ENCODE measurements at regions of chr3 and their contacts with region 1.

Region 1: GRCh38 chr3:159828542-159828943 is 160.1 kb upstream of the IL12A start:
- H3K4me3 ChIP-seq: no peak overlapping the region
- H3K27ac ChIP-seq: peak overlapping the region; percentile 55
- H3K4me1 ChIP-seq: peaks cover 27% of the 10 kb centered on the region
- CTCF ChIP-seq: no peak

Region 2: DNA sequence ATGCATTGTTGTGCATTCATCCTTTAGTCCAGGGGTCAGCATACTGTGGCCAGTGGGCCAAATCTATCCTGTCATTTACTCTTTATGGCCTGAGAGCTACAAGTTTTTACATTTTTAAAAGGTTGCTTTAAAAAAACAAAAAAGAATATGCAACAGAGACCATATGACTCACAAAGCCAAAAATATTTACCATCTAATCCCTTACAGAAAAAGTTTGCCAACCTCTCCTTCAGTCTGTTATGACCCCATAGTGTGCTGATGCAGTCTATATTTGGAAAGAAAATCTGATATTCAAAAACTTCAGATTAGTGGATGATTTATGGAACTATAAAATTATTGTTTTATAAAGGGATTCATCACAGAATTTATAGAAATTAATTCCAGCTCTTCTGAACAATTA is 77.4 kb before region 1 on chr3:
- CTCF ChIA-PET with region 1: no interaction called
- POLR2A ChIA-PET with region 1: no interaction called
- H3K4me3 ChIP-seq: no peak overlapping the region
- H3K27ac ChIP-seq: no peak overlapping the region
- H3K4me1 ChIP-seq: no peaks in the 10 kb centered on the region
- CTCF ChIP-seq: no peak

Region 3: DNA sequence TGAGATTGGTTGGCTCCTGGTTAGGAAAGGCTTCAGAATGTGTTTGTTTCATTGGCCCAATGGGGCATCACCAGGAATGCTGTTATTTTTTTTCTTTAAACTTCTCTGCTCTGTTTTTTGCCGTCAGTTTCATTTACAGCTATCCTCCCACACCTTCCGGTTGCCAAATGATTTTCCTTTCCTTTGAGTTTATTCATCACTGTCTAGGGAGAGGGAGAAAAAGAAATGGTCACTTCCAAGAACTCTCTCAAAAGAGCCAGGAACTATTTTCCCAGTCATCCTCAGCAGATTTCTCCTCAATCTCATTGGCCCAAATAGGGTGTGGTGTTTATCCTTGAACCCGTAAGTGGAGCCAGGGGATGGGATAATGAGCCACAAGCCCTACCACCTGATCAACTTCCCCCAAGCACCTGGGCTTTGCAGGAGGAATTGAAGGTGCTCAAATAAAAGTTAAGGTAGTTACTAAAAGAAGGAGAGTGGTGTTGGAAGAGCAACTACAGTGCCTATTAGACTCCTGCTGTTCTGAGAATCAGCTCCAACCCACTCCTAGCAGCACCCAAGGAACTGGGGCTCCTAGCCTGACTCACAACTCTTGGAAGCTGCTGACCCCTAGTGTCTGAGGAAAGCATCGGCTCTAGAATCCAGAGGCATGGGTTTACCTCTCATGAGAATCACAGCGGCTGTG is 23.7 kb before region 1 on chr3:
- CTCF ChIA-PET with region 1: interaction called, 11 read pairs
- POLR2A ChIA-PET with region 1: no interaction called
- H3K4me3 ChIP-seq: no peak overlapping the region
- H3K27ac ChIP-seq: no peak overlapping the region
- H3K4me1 ChIP-seq: peaks cover 26% of the 10 kb centered on the region
- CTCF ChIP-seq: peak; percentile 76

Region 4: DNA sequence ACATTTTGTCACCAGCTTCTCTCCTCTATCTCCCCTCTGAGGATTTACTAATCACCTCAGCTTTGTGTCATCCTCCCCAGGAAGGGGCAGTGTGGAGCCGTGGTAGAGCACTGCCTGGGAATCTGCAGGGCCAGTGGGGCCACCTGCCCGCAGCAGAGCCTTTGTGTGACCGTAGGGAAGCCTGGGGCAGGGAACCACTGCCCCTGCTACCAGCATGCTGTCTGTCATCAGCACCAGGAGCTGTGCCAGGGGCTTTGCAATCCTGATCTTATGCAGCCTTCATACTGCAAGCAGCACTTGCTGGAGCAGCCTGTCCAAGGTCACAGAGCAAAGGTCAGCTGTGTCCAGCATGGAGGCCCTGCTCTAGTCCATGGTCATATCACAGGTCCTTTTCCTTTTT is 10.1 kb before region 1 on chr3:
- CTCF ChIA-PET with region 1: interaction called, 12 read pairs
- POLR2A ChIA-PET with region 1: no interaction called
- H3K4me3 ChIP-seq: no peak overlapping the region
- H3K27ac ChIP-seq: no peak overlapping the region
- H3K4me1 ChIP-seq: peaks cover 8% of the 10 kb centered on the region
- CTCF ChIP-seq: peak; percentile 16; the same call in 1 of the 2 replicates

Region 5: DNA sequence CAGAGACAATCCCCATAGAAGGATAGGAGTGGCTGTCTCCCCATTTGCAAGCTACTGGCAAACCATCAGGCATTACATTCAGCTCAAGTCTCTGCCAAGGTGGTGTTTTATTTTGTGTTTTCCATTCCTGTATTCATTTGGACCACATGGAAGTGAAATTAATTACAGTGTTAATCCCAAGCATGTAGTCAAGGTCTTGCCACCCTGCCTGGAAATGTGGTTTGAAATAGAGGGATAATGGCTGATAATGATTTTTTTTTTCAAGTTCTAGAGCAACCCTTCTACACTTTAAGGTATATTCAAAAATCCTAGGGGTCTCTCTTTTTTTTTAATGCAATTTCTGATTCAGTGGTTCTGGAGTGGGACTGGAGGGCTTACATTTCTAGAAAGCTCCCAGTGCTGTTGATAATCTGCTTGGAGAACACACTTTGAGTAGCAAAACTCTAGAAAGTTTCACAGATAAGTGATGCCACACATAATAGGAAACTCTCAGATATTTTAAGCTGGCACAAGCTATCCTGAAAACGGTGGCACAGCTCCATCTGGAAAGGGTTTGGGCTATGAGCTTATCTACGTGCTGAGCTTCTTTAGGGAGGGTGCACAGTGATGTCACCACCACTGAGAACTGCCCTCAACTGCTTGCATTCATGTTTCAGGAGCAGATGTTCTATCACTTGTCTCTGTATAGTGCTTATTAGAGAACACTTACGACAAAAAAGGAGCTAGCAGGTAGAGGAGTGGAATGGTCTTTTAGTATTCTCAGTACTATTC is 20.0 kb after region 1 on chr3:
- CTCF ChIA-PET with region 1: interaction called, 22 read pairs
- POLR2A ChIA-PET with region 1: interaction called, 4 read pairs
- H3K4me3 ChIP-seq: no peak overlapping the region
- H3K27ac ChIP-seq: no peak overlapping the region
- H3K4me1 ChIP-seq: peaks cover 18% of the 10 kb centered on the region
- CTCF ChIP-seq: no peak

Region 6: GRCh38 chr3:159865011-159865579 is 36.6 kb after region 1 on chr3:
- CTCF ChIA-PET with region 1: interaction called, 10 read pairs
- POLR2A ChIA-PET with region 1: no interaction called
- H3K4me3 ChIP-seq: no peak overlapping the region
- H3K27ac ChIP-seq: peak overlapping the region; percentile 70
- H3K4me1 ChIP-seq: peaks cover 17% of the 10 kb centered on the region
- CTCF ChIP-seq: no peak

Region 7: DNA sequence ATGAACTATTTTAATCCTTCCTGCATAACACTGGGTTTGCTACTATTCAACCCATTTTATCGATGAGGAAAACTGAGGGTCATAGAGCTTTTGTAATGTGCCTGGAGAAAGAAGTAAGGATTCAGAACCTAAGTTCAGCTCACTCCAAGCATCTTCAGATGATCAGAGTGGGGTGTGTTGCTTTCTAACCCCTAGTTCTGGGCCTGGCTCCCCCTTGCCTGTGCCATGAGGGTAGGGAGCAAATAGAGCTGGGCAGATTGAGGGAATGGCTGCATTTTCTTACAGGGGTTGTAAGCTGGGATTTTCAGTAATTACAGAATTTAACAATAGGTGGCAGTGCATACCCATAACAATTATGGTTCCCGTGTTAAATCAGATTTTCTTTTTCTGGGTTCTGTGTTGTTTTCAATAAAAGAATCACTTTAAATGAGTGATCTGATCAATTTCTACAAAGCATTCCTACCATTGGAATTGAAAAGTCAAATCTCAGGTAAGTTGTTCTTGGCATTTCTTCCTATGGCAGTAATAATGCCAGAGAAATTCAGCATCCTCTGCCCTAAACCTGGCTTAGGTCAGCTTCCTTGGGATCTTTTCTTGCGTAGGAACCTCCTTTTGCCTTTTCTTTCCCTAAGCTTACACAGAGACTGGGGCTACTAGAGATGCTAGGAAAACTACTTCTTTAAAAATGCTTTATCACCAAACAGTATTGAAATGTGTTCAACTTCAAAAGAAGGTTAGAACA is 56.3 kb after region 1 on chr3:
- CTCF ChIA-PET with region 1: interaction called, 45 read pairs
- POLR2A ChIA-PET with region 1: no interaction called
- H3K4me3 ChIP-seq: no peak overlapping the region
- H3K27ac ChIP-seq: no peak overlapping the region; the same call in 1 of the 2 replicates
- H3K4me1 ChIP-seq: peaks cover 11% of the 10 kb centered on the region
- CTCF ChIP-seq: no peak

Measured in HEK293 (cell line).